H1 (cell line): ENCODE measurements at regions of chr7 and their contacts with region 1.

Region 1: DNA sequence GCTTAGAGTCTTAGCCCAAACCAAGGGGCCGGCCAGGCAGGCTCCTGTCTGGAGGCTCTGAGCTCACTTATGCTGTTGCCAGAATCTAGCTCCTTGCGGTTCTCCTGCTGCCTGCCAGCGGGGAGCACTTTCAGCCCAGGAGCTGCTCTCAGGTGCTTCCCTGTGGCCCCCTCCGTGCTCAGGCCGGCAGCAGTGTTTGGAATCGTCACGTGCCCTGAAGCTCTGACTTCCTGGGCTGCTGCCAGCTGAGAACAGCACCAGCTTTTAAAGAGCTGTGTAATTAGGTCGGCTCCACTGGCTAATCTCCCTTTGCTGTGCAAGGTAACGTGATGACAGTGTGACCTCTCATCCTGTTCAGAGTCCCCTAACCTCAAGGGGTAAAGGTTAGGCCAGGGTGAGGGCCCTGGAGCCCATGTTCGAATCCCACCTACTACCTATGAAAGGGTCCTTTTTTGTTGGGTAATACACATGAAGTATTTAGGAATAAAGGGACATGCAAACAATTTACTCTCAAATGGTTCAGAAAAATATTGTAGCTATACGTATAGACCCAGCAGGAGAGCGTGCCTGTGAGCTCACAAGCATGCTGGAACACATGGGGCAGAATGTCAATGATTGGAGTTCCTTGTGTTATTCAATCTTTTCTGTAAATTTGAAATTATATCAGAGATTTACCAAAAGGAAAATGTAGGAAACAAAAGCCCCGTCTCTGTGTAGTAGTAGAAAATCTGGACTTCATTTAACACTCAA is 16.6 kb downstream of the ZNF862 start:
- DNase-seq: peak in 1 of 2 experiments; percentile 62
- H3K4me3 ChIP-seq: peak overlapping the region in 2 of 4 experiments; percentile 1 to 27; a peak in 1 of 8 replicates
- H3K27ac ChIP-seq: no peak overlapping the region
- H3K4me1 ChIP-seq: peaks cover 6 to 17% (median 11%) of the 10 kb centered on the region in 4 experiments
- H3K27me3 ChIP-seq: no peaks in the 10 kb centered on the region
- CTCF ChIP-seq: no peak
- EP300 ChIP-seq: no peak
- POLR2A ChIP-seq: no peak
- RAD21 ChIP-seq: no peak

Region 2: GRCh38 chr7:149692557-149692982 is 162.2 kb before region 1 on chr7:
- CTCF ChIA-PET with region 1: no interaction called
- POLR2A ChIA-PET with region 1: no interaction called
- DNase-seq: peak in 1 of 2 experiments; percentile 75
- H3K4me3 ChIP-seq: peak overlapping the region; percentile 51 to 81 (median 68)
- H3K27ac ChIP-seq: no peak overlapping the region
- H3K4me1 ChIP-seq: peaks cover 0 to 2% (median 0%) of the 10 kb centered on the region in 4 experiments; a peak in 2 of 7 replicates
- H3K27me3 ChIP-seq: no peaks in the 10 kb centered on the region
- CTCF ChIP-seq: no peak
- EP300 ChIP-seq: no peak
- POLR2A ChIP-seq: no peak
- RAD21 ChIP-seq: no peak

Region 3: GRCh38 chr7:149832332-149833041 is 22.3 kb before region 1 on chr7:
- CTCF ChIA-PET with region 1: interaction called, 15 read pairs
- POLR2A ChIA-PET with region 1: interaction called, 3 read pairs
- DNase-seq: no peak
- H3K4me3 ChIP-seq: no peak overlapping the region
- H3K27ac ChIP-seq: no peak overlapping the region
- H3K4me1 ChIP-seq: peaks cover 0 to 10% (median 6%) of the 10 kb centered on the region in 4 experiments; a peak in 6 of 7 replicates
- H3K27me3 ChIP-seq: no peaks in the 10 kb centered on the region
- CTCF ChIP-seq: peak in 1 of 3 experiments; percentile 32; a peak in 1 of 4 replicates
- EP300 ChIP-seq: no peak
- POLR2A ChIP-seq: no peak
- RAD21 ChIP-seq: no peak

Region 4: DNA sequence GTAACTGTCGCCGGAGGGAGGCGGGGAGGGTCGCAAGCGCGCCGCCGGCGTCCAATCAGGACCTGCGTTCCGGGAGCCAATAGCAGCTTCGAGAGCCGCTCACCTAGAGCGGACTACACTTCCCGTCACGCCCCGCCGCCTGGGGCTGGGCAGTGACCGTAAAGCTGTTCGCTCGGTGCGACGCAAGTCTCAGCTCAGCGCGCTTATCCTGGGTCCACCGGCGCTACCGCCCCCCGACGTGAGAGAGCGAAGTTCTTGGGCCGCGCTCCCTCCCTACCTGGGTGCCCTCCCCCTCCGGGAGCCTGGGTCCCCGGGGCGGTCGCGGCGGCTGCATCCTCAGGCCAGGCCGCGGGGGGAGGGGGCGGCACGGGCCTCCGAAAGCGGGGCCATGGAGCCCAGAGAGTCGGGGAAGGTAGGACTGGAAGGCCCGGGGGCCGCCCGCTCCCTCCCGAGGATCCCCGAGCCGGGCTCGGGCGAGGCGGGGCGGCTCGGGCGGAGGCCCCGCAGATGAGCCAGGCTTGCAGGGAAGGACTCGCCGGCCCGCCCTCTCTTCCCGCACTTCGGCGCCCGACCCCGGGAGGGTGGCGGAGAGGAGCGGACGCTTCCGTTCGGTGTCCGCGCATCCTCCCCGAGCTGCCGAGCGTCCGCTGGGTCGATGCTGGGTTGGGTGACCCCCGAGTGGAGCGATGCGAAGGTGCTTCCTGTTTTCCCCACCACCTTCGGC is 16.4 kb before region 1 on chr7 and contains the start of gene ZNF862:
- CTCF ChIA-PET with region 1: interaction called, 25 read pairs
- POLR2A ChIA-PET with region 1: interaction called, 14 read pairs
- DNase-seq: peak; percentile 93 to 96
- H3K4me3 ChIP-seq: peak within 1 kb of the TSS; percentile 61 to 91 (median 82)
- H3K27ac ChIP-seq: peak within 1 kb of the TSS; percentile 18; the same call in 1 of the 2 replicates
- H3K4me1 ChIP-seq: peaks cover 0 to 6% (median 0%) of the 10 kb centered on the region in 4 experiments; a peak in 3 of 7 replicates
- H3K27me3 ChIP-seq: no peaks in the 10 kb centered on the region; a peak in 2 of 7 replicates
- CTCF ChIP-seq: no peak
- EP300 ChIP-seq: no peak
- POLR2A ChIP-seq: peak in 1 of 2 experiments; percentile 54; a peak in 1 of 3 replicates
- RAD21 ChIP-seq: no peak
- total RNA-seq, gene ZNF862: 2.5 and 3.9 TPM in 2 replicates